Activated CD4-positive, alpha-beta T cell treated with anti-CD3 and anti-CD28 coated beads, Interleukin-2, amount 10 ng/mL, durations not matched to agents 24 days and 14 days (primary cell): ENCODE measurements at regions of chr1 and their contacts with region 1.

Region 1: GRCh38 chr1:179025125-179025974 is at the start of gene FAM20B:
- DNase-seq: peak; percentile 97
- H3K4me3 Mint-ChIP-seq: peak within 1 kb of the TSS; percentile 89
- H3K27ac Mint-ChIP-seq: peak within 1 kb of the TSS; percentile 86
- H3K4me1 Mint-ChIP-seq: peaks cover 37% of the 10 kb centered on the region
- H3K27me3 Mint-ChIP-seq: peaks cover 17% of the 10 kb centered on the region
- total RNA-seq, gene FAM20B: 40.4 and 45.2 TPM in 2 replicates

Region 2: DNA sequence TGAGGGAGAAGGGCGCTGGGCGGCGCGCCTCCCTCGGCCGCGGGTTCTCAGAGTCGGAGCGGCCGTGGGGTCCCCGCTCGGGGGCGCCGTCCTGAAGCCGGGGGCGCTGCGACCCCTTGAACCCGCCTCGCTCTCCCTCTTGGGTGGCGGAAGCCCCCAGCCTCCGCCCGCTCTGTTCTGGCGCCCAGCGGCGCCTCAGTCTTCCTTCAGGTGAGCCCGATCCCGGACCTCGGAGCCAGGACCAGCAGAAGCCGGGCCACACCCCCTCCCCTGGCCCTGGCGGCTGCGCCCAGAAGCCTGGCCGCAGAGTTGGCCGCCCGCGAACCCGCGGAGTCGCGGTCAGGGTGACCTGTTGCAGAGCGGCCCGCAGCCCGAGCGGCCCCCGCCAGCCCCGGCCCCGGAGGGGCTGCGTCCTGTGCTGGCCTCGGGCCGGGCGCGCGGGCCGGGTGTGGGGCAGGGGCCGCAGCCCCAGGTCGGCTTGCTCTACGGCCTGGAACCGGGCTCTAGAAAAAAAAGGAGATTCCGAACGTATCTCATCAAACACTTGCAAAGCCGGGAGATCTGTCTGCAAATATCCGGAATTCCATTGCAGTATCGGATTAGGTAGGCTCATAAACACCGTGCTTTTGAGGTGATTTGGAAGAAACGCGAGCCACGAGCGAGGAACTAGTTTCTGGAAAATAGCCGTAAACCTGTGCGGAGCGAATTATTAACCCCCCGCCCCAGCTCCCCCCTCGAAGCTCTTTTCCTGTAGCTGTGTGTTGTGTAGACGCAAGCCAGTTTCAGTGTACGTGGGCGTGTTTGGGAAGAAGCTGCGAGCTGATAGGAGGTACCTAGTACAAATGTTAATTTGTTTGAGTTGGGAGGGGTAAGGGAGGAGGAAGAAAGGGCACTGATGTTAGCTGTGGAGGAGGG is 299.5 kb before region 1 on chr1:
- intact Hi-C with region 1: loop called (anchors 5 kb)
- DNase-seq: peak; percentile 87
- H3K4me3 Mint-ChIP-seq: peak overlapping the region; percentile 86
- H3K27ac Mint-ChIP-seq: peak overlapping the region; percentile 72
- H3K4me1 Mint-ChIP-seq: peaks cover 9% of the 10 kb centered on the region
- H3K27me3 Mint-ChIP-seq: peaks cover 15% of the 10 kb centered on the region

Region 3: DNA sequence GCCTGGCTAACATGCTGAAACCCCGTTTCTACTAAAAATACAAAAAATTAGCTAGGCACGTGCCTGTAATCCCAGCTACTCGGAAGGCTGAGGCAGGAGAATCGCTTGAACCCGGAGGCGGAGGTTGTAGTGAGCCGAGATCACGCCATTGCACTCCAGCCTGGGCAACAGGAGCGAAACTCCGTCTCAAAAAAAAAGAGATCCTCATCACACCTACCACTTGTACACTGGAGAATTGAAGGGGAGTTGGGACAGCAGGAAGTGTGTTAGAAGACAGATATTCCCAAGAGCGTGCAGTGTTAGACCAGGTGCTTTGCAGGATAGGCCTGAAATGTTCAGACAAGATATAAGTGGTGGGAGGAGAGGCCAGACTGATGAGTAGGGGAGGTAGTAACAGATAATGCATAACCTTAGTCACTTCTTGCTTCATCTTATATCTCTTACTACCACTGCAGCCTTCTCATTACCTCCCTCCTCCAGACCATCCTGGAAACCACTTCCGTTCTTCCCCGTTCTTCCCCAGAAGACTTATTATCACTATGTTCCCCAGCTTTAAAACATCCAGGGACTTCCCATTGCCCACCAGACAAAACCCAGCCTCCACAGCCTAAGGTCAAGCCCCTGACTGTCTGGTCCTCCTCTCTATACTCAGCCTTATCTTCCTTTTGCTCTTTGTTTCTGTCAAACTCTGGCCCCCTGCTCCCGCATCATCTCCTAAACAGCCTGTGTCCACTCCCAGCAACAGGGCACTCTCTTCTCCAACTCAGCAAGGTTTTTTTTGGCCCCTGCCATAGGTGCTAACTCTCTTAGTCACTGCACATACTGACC is 21.7 kb after region 1 on chr1:
- intact Hi-C with region 1: no loop called
- DNase-seq: no peak
- H3K4me3 Mint-ChIP-seq: no peak overlapping the region
- H3K27ac Mint-ChIP-seq: no peak overlapping the region
- H3K4me1 Mint-ChIP-seq: peaks cover 6% of the 10 kb centered on the region
- H3K27me3 Mint-ChIP-seq: no peaks in the 10 kb centered on the region

Region 4: GRCh38 chr1:179142889-179143299 is 117.5 kb after region 1 on chr1:
- intact Hi-C with region 1: loop called (anchors 5 kb)
- DNase-seq: no peak
- H3K4me3 Mint-ChIP-seq: peak overlapping the region; percentile 63
- H3K27ac Mint-ChIP-seq: peak overlapping the region; percentile 81
- H3K4me1 Mint-ChIP-seq: peaks cover 30% of the 10 kb centered on the region
- H3K27me3 Mint-ChIP-seq: no peaks in the 10 kb centered on the region

Region 5: DNA sequence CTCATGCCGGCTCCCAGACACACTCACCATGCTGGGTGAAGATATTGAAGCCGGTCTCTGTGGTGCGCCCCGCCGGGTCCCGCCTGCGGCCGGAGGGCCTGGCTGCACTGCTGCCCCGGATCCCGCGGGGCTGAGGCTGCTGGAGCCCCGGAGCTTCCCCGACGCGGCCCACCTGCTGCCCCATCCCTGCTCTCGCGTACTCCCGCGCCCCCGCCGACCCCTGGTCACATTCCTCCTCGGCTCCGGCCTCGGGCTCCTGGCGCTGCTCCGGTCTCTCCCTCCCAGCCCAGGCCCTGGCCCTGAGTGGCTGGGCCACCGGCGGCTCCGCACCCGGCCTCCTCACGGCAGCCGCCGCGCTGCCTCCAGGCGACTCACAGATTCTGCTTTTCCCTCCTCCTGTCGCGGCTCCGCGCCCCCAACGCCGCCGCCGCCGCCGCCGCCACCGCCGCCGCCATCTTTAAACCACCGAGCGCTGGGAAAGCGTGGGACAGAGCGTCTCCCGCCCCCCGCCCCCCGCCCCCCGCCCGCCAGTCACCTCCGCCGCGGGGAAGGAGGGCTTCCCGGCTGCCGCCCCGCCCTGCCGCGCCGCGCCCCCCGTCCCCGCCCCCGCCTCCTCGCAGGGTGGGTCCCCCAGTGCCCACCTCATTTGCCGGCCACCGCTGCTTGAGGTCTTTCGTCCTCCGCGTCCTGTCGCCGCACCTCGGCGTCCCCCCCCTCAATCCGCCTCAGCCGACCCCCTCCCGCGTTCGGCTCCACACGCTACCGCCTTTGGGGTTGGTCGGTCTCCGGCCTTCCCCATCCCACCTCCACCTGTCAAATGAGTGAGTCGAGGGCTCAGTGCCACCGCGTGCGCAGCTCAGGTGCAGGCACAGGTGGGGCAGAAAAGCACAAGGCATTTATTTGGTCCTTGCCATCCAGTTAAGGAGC is 204.1 kb after region 1 on chr1 and contains the start of gene ABL2:
- intact Hi-C with region 1: loop called (anchors 1 kb)
- DNase-seq: peak; percentile 88
- H3K4me3 Mint-ChIP-seq: peak within 1 kb of the TSS; percentile 90
- H3K27ac Mint-ChIP-seq: peak within 1 kb of the TSS; percentile 89
- H3K4me1 Mint-ChIP-seq: peaks cover 24% of the 10 kb centered on the region
- H3K27me3 Mint-ChIP-seq: peaks cover 4% of the 10 kb centered on the region
- total RNA-seq, gene ABL2: 9.9 and 11.1 TPM in 2 replicates

Region 6: DNA sequence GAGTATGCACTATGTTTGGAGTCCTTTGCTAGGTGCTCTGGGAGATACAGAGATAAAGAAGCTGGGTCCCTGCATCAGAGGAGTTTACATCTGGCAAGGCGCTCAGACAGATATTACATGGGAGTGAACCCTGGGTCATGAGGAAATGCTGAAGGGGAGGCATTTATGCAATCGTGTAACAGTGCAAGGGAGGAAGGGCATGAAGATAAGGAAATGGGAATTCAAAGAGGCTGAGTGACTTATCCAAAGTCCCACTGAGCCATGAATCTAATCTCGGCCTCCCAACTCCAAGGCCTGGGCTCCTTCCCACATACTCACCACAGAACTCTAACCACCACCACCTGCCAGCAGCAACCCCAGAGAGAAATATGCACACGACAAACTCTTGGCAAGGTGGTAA is 769.3 kb after region 1 on chr1:
- intact Hi-C with region 1: no loop called
- DNase-seq: no peak
- H3K4me3 Mint-ChIP-seq: no peak overlapping the region
- H3K27ac Mint-ChIP-seq: no peak overlapping the region
- H3K4me1 Mint-ChIP-seq: no peaks in the 10 kb centered on the region
- H3K27me3 Mint-ChIP-seq: peaks cover 6% of the 10 kb centered on the region